ENCODE measurements at regions of chr17 and their contacts with region 1.

Region 1: DNA sequence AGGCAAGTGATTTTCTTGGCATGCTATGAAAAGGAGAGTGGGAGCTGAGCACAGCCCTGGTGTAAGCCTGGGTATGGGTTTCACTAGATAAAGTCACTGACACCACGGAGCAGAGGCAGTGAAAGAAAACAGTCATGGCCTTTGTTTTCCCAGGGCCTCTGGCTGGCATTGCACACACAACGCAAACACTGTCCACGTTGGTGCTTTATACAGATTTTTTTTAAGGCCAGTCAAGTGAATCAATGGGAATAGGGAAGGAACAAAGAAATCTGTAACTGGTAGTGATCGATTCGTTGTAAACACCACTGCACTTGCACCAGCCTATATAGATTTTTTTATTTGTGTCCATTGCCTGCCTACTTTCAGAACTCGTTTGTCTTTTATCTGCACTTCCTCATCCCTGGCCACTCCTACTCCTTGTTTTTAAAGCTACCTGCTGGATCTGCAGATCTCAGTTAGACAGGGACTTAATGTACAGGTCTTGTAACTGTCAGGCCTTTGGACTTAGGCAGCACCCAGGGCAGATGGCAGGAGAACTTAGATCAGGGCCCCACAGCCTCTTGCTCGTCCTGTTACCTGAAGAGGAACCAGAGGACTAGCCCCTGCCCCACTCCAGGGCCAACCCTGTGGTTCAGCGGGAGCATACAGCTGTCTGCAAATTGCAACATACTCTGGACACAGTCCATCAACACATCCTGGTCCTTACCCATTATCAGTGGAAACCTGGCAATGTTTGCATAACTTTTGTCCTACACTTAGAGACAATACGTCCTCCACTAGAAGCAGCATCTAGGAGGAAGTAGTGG is 10.6 kb upstream of the TMIGD1 start:
- DNase-seq: no peak
- H3K4me3 ChIP-seq: peak overlapping the region in 1 of 4 donors; percentile 7
- H3K27ac ChIP-seq: peak overlapping the region; percentile 61 to 85 (median 70)
- H3K4me1 ChIP-seq: peaks cover 19 to 59% (median 35%) of the 10 kb centered on the region in 3 donors
- H3K27me3 ChIP-seq: no peaks in the 10 kb centered on the region
- CTCF ChIP-seq: no peak
- POLR2A ChIP-seq: no peak

Region 2: GRCh38 chr17:30450118-30451013 is 105.9 kb after region 1 on chr17:
- intact Hi-C with region 1: loop called (anchors 10 kb)
- DNase-seq: no peak
- H3K4me3 ChIP-seq: no peak overlapping the region
- H3K27ac ChIP-seq: no peak overlapping the region
- H3K4me1 ChIP-seq: no peaks in the 10 kb centered on the region
- H3K27me3 ChIP-seq: no peaks in the 10 kb centered on the region
- CTCF ChIP-seq: no peak
- POLR2A ChIP-seq: no peak